WTC11 (cell line): ENCODE measurements at regions of chr13 and their contacts with region 1.

Region 1: GRCh38 chr13:95676762-95677563 is at the start of gene DNAJC3:
- DNase-seq: peak; percentile 99
- ATAC-seq: peak; percentile 96
- H3K4me3 Mint-ChIP-seq: peak within 1 kb of the TSS; percentile 84
- H3K27ac Mint-ChIP-seq: peak within 1 kb of the TSS; percentile 95
- H3K4me1 Mint-ChIP-seq: peaks cover 34% of the 10 kb centered on the region
- H3K27me3 Mint-ChIP-seq: no peaks in the 10 kb centered on the region
- CTCF ChIP-seq: no peak
- total RNA-seq, gene DNAJC3: 16.7 to 20.0 TPM (median 17.9 TPM) in 3 replicates

Region 2: DNA sequence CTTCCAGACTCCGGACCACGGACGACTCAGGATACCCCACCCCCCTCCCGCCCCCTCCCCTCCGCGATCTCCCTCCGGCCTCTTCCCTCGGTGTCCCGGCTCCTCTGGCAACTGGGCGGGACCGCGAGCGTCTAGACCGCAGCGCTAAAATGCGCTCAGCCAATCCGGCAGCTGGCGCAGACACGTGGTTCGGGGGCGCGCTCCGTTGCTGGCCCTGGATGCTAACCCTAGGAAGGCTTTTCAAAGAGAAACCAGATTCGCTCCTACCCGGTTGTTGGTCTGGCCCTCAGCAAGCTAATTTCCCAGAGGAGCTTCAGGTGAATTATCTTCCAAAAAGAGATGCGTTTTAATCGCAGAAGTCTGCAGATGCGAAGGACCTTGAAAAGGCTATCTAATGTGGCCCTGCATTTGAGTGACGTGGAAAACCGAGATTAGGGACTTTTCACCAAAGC is 32.3 kb before region 1 on chr13 and contains the start of gene DZIP1:
- CTCF ChIA-PET with region 1: interaction called, 3 read pairs
- POLR2A ChIA-PET with region 1: interaction called, 17 read pairs
- DNase-seq: peak; percentile 92
- ATAC-seq: peak; percentile 86
- H3K4me3 Mint-ChIP-seq: peak within 1 kb of the TSS; percentile 89
- H3K27ac Mint-ChIP-seq: no peak within 1 kb of the TSS
- H3K4me1 Mint-ChIP-seq: peaks cover 19% of the 10 kb centered on the region
- H3K27me3 Mint-ChIP-seq: peaks cover 9% of the 10 kb centered on the region
- CTCF ChIP-seq: no peak
- total RNA-seq, gene DZIP1: 31.0 to 33.5 TPM (median 32.0 TPM) in 3 replicates

Region 3: DNA sequence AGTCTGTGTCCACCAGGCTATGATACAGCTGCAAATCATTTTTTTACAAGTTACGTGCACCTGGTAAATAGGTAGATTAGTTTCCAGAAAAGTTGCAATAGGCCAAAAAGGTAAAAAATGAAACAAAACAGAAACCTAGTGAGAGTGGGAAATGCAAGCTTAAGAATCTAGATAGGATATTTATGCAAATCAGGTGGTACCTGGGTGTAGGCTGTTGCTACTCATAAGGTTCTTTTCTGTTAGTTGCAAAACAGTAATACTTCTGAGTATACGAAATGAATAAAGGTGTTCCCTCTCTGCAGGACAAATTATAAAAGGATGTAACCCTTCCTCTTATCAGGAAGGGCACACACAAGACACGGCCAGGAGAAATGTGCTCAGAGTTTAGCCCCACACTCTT is 278.3 kb after region 1 on chr13:
- CTCF ChIA-PET with region 1: no interaction called
- POLR2A ChIA-PET with region 1: no interaction called
- DNase-seq: no peak
- ATAC-seq: no peak
- H3K4me3 Mint-ChIP-seq: no peak overlapping the region
- H3K27ac Mint-ChIP-seq: peak overlapping the region; percentile 97
- H3K4me1 Mint-ChIP-seq: peaks cover 44% of the 10 kb centered on the region
- H3K27me3 Mint-ChIP-seq: no peaks in the 10 kb centered on the region
- CTCF ChIP-seq: no peak